ENCODE measurements at regions of chr15 and their contacts with region 1.

Region 1: GRCh38 chr15:35697549-35698299 is 151.8 kb upstream of the DPH6 start:
- DNase-seq: no peak
- H3K4me3 ChIP-seq: no peak overlapping the region
- H3K27ac ChIP-seq: peak overlapping the region; percentile 24 to 78 (median 74)
- H3K4me1 ChIP-seq: peaks cover 0 to 9% (median 0%) of the 10 kb centered on the region in 6 donors
- H3K27me3 ChIP-seq: no peaks in the 10 kb centered on the region
- CTCF ChIP-seq: no peak
- POLR2A ChIP-seq: no peak

Region 2: DNA sequence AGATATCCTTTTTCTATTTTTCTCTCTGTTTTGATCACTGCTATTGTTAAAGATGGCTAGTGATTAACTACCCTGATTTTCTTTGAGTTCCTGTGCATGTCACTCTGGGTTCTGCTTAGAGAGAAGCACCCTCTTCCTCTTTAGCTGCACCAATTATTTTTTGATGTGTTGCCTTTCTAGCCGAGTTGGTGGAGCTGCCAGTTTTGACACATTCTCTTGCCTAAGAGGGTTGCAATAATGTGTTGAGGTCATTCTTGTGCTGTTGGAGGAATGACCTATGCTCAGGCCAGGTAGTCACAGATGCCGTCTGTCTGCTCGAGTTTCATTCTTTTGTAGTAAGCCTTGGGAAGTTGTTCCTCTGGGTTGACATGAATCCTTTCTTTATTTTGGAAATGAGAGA is 67.2 kb before region 1 on chr15:
- intact Hi-C with region 1: loop called (anchors 10 kb)
- DNase-seq: no peak
- H3K4me3 ChIP-seq: no peak overlapping the region
- H3K27ac ChIP-seq: no peak overlapping the region
- H3K4me1 ChIP-seq: no peaks in the 10 kb centered on the region
- H3K27me3 ChIP-seq: no peaks in the 10 kb centered on the region
- CTCF ChIP-seq: no peak
- POLR2A ChIP-seq: no peak